Activated T-helper 1 cell treated with anti-CD3 and anti-CD28 coated beads, Interleukin-12 subunit alpha, Interleukin-12 subunit beta, Interleukin-2, Interleukin-4 antibody, amounts not matched to agents 30 ng/mL and 10 ng/mL and 1 ng/mL, durations not matched to agents 14 hours and 24 hours and 36 hours (primary cell): ENCODE measurements at regions of chr17 and their contacts with region 1.

Region 1: DNA sequence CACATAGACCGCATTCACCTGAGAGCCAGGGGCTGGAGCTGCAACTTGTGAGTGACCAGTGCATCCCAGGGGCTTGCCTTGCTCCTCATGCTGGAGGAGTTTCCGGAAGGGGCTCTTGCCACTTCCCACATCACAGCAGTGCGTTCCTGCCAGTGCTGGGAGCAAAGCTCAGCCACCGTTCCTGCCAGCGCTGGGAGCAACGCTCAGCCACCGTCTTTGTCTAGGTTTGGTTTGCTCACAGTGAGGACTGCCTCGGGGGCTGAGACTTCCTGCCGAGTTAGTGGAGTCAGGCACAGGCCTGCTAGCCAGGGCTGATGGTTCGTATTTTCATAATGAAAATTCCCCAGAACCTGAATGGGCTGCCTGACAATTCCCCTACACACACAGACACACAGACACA is 5.4 kb upstream of the CHRNE start:
- DNase-seq: no peak
- H3K4me3 Mint-ChIP-seq: no peak overlapping the region
- H3K27ac Mint-ChIP-seq: no peak overlapping the region
- H3K4me1 Mint-ChIP-seq: peaks cover 12% of the 10 kb centered on the region
- H3K27me3 Mint-ChIP-seq: peaks cover 12% of the 10 kb centered on the region

Region 2: DNA sequence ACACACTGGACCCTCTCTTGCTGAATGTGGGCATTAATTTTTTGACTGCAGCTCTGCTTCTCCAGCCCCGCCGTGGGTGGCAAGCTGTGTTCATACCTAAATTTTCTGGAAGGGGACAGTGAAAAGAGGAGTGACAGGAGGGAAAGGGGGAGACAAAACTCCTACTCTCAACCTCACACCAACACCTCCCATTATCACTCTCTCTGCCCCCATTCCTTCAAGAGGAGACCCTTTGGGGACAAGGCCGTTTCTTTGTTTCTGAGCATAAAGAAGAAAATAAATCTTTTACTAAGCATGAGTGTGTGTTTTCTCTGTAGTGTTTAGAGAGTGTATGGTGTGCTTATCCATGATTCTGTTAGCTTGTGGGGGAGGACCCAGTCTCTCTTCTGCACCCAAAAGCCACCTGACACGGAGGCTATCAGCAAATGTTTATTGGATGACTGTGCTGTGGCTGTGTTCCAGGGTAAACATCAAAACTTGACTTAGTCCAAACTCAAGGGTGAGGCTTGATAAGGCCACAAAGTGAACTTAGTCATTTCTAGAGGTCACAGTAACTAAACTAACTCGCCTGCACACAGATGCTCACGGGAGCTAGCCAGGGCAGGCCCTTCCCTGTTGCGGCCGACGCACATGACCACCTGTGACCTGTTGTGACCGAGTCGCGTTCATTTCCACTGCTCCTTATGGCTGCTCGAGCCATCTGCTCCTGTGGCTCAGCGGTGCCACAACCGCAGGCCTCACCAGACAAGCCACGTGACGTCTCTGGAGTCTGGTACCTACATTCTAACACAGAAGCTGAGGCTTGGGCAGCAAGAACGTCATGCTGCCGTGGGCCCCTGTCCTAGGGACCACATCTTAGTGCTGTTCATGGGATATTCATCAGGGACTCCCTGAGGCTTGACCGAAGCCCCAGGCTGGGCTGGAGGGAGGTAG is 186.8 kb before region 1 on chr17:
- intact Hi-C with region 1: no loop called
- DNase-seq: no peak
- H3K4me3 Mint-ChIP-seq: no peak overlapping the region
- H3K27ac Mint-ChIP-seq: peak overlapping the region; percentile 71
- H3K4me1 Mint-ChIP-seq: peaks cover 43% of the 10 kb centered on the region
- H3K27me3 Mint-ChIP-seq: no peaks in the 10 kb centered on the region

Region 3: DNA sequence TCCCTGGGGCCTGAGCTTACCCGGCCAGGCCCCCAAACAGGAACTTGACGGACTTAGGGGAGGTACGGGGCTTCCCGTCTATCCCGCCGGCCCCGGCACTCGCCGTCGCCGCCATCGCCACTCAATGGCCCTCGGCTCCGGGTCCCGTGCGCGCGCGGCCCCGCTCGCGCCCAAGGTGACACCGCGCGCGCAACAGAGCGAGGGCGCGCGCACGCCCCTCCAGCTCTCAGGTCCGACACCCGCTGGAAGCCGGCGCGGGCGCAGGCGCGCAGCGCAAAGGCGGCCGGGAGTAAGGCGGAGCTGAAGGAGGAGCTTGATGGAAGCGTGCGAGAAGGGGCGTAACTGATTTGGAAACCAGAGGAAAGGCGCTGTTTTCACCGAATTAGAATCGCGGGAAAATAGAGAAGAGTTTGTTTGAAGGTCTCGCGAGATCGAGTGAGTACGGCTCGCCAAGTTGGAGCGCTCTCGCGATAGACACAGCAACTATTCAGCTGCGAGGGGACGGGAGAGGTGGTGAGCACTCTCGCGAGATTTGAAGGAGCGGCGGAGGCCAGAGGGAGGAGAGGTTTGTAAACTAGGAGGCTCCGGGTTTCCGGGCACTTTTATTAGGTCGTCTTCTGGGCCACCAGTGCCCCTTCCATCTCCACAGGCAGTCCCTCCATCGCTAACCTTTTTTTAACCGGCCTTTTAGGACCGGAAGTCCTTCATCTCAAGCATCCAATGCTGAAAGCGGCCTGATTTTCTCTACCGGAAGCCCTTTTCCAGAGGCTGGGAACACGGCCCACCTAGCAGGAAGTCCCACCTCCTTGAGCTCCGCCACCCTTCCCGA is 31.7 kb after region 1 on chr17 and contains the starts of genes RNF167 and SLC25A11:
- intact Hi-C with region 1: loop called (anchors 1 kb)
- DNase-seq: peak; percentile 98
- H3K4me3 Mint-ChIP-seq: peak within 1 kb of the TSS; percentile 100
- H3K27ac Mint-ChIP-seq: peak within 1 kb of the TSS; percentile 94
- H3K4me1 Mint-ChIP-seq: peaks cover 56% of the 10 kb centered on the region
- H3K27me3 Mint-ChIP-seq: no peaks in the 10 kb centered on the region
- total RNA-seq, gene RNF167: 138 and 140 TPM in 2 replicates
- total RNA-seq, gene SLC25A11: 111 and 116 TPM in 2 replicates

Region 4: DNA sequence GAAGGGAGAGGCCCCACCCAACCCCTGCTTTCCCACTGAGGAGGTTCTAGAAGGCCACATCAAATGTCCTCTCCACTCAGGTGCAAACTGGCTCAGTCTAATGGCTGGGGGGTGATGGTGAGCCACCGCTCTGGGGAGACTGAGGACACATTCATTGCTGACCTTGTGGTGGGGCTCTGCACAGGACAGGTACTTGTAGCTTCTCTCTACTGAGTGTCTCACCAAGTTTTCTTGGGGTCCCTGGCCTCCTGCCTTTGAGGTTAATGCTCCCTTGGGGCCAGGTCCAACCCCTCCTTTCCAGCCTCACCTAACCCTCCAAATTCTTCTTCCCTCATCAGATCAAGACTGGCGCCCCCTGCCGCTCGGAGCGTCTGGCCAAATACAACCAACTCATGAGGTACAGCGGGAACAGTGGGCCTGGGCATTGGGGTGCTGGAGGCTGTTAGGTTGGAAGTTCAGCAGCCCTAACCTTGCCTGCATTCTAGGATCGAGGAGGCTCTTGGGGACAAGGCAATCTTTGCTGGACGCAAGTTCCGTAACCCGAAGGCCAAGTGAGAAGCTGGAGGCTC is 48.3 kb after region 1 on chr17:
- intact Hi-C with region 1: loop called (anchors 1 kb)
- DNase-seq: peak; percentile 20
- H3K4me3 Mint-ChIP-seq: no peak overlapping the region
- H3K27ac Mint-ChIP-seq: no peak overlapping the region
- H3K4me1 Mint-ChIP-seq: no peaks in the 10 kb centered on the region
- H3K27me3 Mint-ChIP-seq: no peaks in the 10 kb centered on the region

Region 5: DNA sequence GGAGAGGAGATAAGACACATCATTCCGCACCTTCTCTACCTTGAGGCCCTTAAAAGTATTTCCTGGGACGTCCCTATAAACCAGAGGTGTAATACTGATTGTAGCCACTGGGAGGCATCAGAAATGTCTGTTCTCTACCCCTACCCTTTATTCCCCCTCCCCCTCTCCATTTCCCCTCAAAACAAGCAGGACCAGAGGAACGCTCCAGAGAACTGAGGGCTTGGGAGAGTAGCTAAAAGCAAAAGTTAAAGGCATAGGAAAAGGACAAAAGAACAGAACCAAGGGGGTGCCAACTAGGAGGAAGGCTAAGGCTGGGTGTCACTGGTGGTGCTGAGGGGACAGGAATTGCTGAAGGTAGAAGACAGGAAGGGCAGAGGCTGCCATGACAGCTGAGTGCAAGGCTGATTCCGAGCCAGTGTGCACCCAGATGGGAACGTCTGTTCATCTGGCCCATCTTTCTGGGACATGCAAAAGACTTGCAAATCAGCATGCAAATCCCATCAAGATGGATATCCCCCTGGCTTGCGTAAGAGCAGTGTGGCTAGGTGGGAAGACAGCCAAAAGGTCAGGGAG is 72.4 kb after region 1 on chr17:
- intact Hi-C with region 1: loop called (anchors 1 kb)
- DNase-seq: peak; percentile 42
- H3K4me3 Mint-ChIP-seq: no peak overlapping the region
- H3K27ac Mint-ChIP-seq: peak overlapping the region; percentile 56
- H3K4me1 Mint-ChIP-seq: peaks cover 20% of the 10 kb centered on the region
- H3K27me3 Mint-ChIP-seq: no peaks in the 10 kb centered on the region

Region 6: DNA sequence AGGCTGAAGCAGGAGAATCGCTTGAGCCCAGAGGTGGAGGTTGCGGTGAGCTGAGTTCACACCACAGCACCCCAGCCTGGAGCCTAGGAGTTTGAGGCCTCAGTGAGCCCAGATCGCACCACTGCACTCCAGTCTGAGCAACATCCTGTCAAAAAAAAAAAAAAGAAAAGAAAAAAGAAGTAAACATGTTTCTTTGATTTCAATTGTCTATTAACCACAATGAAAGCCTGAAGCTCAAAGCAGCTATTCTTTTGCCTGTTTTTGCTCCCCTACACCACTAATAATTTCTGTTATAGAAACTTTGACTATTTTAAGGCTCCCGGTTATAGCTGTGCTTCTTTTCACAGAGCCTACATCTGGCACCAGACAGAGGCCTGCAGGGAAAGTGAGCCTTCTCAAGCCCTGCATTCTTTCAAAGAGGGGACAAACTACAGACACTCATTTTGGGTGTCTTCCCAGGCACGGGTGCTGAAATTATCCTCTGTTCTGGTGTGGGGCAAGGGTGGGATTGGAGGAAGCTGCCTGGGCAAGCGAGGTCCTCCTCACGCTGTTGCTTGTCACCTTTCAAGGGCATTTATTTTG is 141.1 kb after region 1 on chr17:
- intact Hi-C with region 1: loop called (anchors 5 kb)
- DNase-seq: peak; percentile 41
- H3K4me3 Mint-ChIP-seq: peak overlapping the region; percentile 51
- H3K27ac Mint-ChIP-seq: peak overlapping the region; percentile 83
- H3K4me1 Mint-ChIP-seq: peaks cover 31% of the 10 kb centered on the region
- H3K27me3 Mint-ChIP-seq: no peaks in the 10 kb centered on the region

Region 7: DNA sequence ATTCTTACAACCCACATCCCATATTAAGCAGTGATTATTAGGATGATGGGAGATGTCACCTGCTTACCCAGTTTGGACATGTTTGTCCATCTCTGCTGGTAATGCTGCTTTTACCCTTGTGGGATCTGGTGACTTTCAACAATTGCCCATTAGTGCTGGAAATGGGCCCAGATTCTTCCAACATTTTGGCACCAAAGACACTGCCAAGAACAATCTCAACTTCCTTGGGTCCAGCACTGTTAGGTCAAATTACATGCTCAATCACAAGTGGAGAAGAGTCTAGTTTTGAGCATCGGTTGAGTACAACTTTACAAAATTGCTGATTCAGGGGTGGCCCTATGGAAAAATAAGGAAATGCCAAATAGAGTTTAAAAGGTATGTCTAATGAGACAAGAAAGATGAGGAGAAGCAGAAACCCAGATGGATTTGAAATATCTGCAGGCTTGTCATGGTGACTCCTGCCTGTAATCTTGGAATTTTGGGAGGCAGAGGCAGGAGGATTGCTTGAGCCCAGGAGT is 157.0 kb after region 1 on chr17:
- intact Hi-C with region 1: loop called (anchors 1 kb)
- DNase-seq: no peak
- H3K4me3 Mint-ChIP-seq: no peak overlapping the region
- H3K27ac Mint-ChIP-seq: peak overlapping the region; percentile 30
- H3K4me1 Mint-ChIP-seq: peaks cover 9% of the 10 kb centered on the region
- H3K27me3 Mint-ChIP-seq: peaks cover 4% of the 10 kb centered on the region